ENCODE measurements at regions of chrX and their contacts with region 1.

Region 1: DNA sequence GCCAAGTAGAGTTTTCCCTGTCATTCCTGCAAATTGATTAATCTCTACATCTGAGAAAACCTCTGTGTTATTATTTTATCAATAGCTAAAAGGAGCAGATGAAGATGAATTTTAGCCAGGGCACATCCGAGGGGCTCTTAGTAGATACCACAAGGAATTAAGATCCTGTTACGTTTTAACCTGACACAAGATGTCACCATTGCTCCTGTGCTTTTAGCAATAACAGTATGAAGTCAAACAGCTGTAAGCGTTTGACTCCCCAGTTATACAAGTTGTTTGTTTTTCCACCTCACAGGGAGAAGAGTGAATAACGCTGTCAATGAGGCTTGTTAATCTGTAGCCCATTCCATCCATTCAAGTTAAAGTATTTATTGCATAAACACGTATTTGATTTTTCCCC is 76.0 kb upstream of the AP1S2 start:
- H3K4me3 ChIP-seq: no peak overlapping the region
- H3K27ac ChIP-seq: no peak overlapping the region
- H3K4me1 ChIP-seq: 0 out of 2 replicates have a peak, but pooled peaks cover 2% of the 10 kb centered on the region
- CTCF ChIP-seq: peak; percentile 31; the same call in 1 of the 2 replicates

Region 2: GRCh38 chrX:15973299-15973698 is 42.7 kb after region 1 on chrX:
- CTCF ChIA-PET with region 1: interaction called, 10 read pairs
- POLR2A ChIA-PET with region 1: no interaction called
- H3K4me3 ChIP-seq: no peak overlapping the region
- H3K27ac ChIP-seq: no peak overlapping the region
- H3K4me1 ChIP-seq: no peaks in the 10 kb centered on the region
- CTCF ChIP-seq: no peak

Measured in HEK293 (cell line).